Natural killer cell (primary cell): ENCODE measurements at regions of chr5 and their contacts with region 1.

Region 1: DNA sequence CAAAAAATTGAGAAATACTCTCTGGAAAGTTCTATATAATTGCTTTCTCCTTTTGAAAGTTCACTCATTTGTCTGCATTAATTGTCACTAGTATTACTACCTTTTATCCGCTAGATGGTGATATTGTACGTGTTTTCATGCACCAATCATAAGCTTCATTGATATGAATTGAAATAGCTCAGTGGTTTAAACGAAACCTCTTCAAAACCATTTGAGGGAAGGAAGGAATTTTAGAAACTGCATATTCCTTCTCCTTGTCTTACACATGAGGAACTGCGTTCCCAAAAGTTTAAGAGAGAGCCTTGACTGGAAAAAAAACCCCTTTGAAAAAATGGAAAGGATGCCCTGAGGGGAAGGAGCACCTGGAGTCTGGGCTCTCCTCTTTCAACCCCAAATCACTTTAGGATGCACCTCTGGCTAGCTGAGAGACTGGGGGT is 98.6 kb downstream of the YTHDC2 start:
- DNase-seq: peak in 1 of 2 donors; percentile 61
- ATAC-seq: peak; percentile 69 to 80 (median 69)
- H3K4me3 ChIP-seq: no peak overlapping the region
- H3K4me3 Mint-ChIP-seq: no peak overlapping the region
- H3K27ac ChIP-seq: no peak overlapping the region
- H3K27ac Mint-ChIP-seq: no peak overlapping the region
- H3K4me1 ChIP-seq: no peaks in the 10 kb centered on the region
- H3K4me1 Mint-ChIP-seq: no peaks in the 10 kb centered on the region
- H3K27me3 ChIP-seq: no peaks in the 10 kb centered on the region
- H3K27me3 Mint-ChIP-seq: peaks cover 7 to 17% of the 10 kb centered on the region in 2 donors
- CTCF ChIP-seq: peak; percentile 79

Region 2: GRCh38 chr5:113421693-113422092 is 190.4 kb before region 1 on chr5:
- intact Hi-C with region 1: no loop called
- DNase-seq: no peak
- ATAC-seq: no peak
- H3K4me3 ChIP-seq: no peak overlapping the region
- H3K4me3 Mint-ChIP-seq: no peak overlapping the region
- H3K27ac ChIP-seq: no peak overlapping the region
- H3K27ac Mint-ChIP-seq: no peak overlapping the region
- H3K4me1 ChIP-seq: no peaks in the 10 kb centered on the region
- H3K4me1 Mint-ChIP-seq: no peaks in the 10 kb centered on the region
- H3K27me3 ChIP-seq: peaks cover 2% of the 10 kb centered on the region
- H3K27me3 Mint-ChIP-seq: peaks cover 4 to 32% of the 10 kb centered on the region in 2 donors
- CTCF ChIP-seq: no peak

Region 3: DNA sequence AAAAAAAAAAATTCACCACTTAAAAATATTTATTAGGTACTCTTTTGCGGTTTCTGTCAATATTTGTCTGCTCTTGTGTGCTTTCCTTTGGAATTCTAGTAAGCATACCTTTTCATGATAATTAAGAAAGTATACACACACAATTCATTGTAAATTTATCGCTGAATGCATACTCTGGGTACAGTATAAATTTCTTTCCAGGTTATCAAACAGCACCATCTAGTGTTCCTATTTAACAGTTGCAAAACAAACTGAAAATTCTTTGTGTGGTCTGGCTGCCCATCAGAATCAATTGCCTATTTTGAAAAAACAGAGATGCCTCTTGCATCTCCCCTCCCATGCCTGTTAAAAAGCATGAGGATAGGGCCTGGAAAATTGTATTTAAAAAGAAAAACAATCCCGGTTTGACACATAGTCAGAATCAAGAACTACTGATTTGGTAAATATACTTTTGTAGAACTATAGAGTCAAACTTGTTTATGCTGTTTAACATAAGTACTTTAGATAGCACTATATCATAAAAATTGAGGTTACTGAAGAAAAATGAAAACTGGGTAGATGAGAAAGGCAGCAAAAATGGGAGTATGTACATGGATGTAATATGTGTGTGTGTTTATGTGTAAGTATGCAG is 1634.4 kb after region 1 on chr5:
- intact Hi-C with region 1: loop called (anchors 2 kb)
- DNase-seq: peak in 1 of 2 donors; percentile 60
- ATAC-seq: peak; percentile 64 to 77 (median 72)
- H3K4me3 ChIP-seq: no peak overlapping the region
- H3K4me3 Mint-ChIP-seq: no peak overlapping the region
- H3K27ac ChIP-seq: no peak overlapping the region
- H3K27ac Mint-ChIP-seq: no peak overlapping the region
- H3K4me1 ChIP-seq: no peaks in the 10 kb centered on the region
- H3K4me1 Mint-ChIP-seq: peaks cover 31 to 40% of the 10 kb centered on the region in 2 donors
- H3K27me3 ChIP-seq: no peaks in the 10 kb centered on the region
- H3K27me3 Mint-ChIP-seq: no peaks in the 10 kb centered on the region
- CTCF ChIP-seq: peak; percentile 90

Region 4: DNA sequence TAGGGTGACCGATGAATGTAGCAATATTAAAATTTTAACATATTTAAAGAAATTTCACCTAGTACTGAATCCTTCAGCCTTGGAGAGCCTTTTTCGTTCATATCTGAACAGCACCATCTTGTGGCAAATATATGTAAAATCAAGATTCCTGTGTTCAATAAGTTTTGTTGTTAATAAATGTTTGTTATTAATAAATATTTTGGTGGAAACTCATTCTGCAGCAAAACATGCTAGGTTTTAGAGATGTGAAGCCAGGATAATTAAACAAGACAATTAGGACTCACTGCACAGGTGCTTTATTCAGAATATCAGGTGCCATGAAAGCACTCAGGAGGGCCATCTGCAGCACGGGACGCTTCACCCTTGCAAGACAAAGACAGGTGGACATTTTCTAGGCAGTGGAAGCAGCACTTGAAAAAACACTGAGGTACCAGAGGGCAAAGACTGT is 1974.5 kb after region 1 on chr5:
- intact Hi-C with region 1: loop called (anchors 5 kb)
- DNase-seq: peak in 1 of 2 donors; percentile 54
- ATAC-seq: peak; percentile 44 to 53 (median 52)
- H3K4me3 ChIP-seq: no peak overlapping the region
- H3K4me3 Mint-ChIP-seq: no peak overlapping the region
- H3K27ac ChIP-seq: no peak overlapping the region
- H3K27ac Mint-ChIP-seq: no peak overlapping the region
- H3K4me1 ChIP-seq: no peaks in the 10 kb centered on the region
- H3K4me1 Mint-ChIP-seq: no peaks in the 10 kb centered on the region
- H3K27me3 ChIP-seq: no peaks in the 10 kb centered on the region
- H3K27me3 Mint-ChIP-seq: no peaks in the 10 kb centered on the region
- CTCF ChIP-seq: peak; percentile 71